Caco-2 (cell line): ENCODE measurements at regions of chr1 and their contacts with region 1.

Region 1: GRCh38 chr1:43135857-43136790 is 36.0 kb downstream of the EBNA1BP2 start:
- DNase-seq: no peak
- H3K4me3 ChIP-seq: no peak overlapping the region
- H3K4me3 Mint-ChIP-seq: no peak overlapping the region
- H3K27ac Mint-ChIP-seq: no peak overlapping the region
- H3K4me1 ChIP-seq: peaks cover 9% of the 10 kb centered on the region
- H3K4me1 Mint-ChIP-seq: peaks cover 10% of the 10 kb centered on the region
- H3K27me3 ChIP-seq: no peaks in the 10 kb centered on the region
- H3K27me3 Mint-ChIP-seq: no peaks in the 10 kb centered on the region
- CTCF ChIP-seq: no peak

Region 2: GRCh38 chr1:43121256-43121900 is 14.7 kb before region 1 on chr1:
- CTCF ChIA-PET with region 1: no interaction called
- POLR2A ChIA-PET with region 1: no interaction called
- intact Hi-C with region 1: loop called (anchors 2 kb)
- DNase-seq: peak in 1 of 2 experiments; percentile 7
- H3K4me3 ChIP-seq: peak overlapping the region; percentile 43
- H3K4me3 Mint-ChIP-seq: peak overlapping the region; percentile 80
- H3K27ac Mint-ChIP-seq: peak overlapping the region; percentile 88
- H3K4me1 ChIP-seq: peaks cover 4% of the 10 kb centered on the region; the same call in 1 of the 2 replicates
- H3K4me1 Mint-ChIP-seq: no peaks in the 10 kb centered on the region
- H3K27me3 ChIP-seq: no peaks in the 10 kb centered on the region
- H3K27me3 Mint-ChIP-seq: no peaks in the 10 kb centered on the region
- CTCF ChIP-seq: no peak